ENCODE measurements at regions of chr3 and their contacts with region 1.

Region 1: DNA sequence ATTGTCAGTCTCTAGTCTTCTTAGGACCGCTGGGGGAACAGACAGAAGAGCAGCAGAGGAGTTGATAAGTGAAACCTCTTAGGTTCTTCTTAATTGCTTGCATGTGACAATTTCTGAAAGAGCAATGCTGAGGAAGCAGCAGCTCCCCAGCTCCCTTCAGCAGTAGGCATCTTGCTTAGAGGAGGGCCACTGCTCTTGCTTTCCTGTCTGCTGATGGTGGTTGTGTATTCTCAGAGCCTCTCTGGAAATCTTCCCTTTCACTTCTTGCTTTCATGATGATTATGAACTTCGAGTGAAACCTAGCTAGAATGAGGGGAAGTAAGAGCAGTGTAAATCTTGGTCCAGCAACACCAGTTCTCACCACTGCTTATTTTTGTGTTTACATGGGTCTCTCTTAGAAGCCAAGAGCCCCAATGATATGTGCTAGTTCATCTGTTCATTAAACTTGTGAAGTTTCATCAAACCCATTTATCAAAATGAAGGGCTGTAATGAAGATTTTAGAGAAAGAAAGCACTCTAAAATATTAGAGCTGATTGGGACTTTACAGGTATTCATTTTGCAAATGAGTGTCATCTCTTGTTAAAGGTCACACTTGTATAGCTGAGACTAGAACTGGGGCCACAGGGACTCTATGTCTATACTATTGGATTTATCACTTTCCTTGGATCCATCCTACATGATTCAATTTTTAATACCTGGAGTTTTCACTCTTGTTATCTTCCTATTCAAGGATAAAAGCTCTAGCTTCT is 246.7 kb downstream of the LPP start:
- DNase-seq: peak; percentile 22
- H3K4me3 Mint-ChIP-seq: no peak overlapping the region
- H3K27ac Mint-ChIP-seq: peak overlapping the region; percentile 63
- H3K4me1 Mint-ChIP-seq: peaks cover 73% of the 10 kb centered on the region
- H3K27me3 Mint-ChIP-seq: peaks cover 4% of the 10 kb centered on the region

Region 2: GRCh38 chr3:188061133-188061532 is 339.5 kb before region 1 on chr3:
- intact Hi-C with region 1: loop called (anchors 5 kb)
- DNase-seq: peak; percentile 38
- H3K4me3 Mint-ChIP-seq: peak overlapping the region; percentile 61
- H3K27ac Mint-ChIP-seq: peak overlapping the region; percentile 87
- H3K4me1 Mint-ChIP-seq: peaks cover 53% of the 10 kb centered on the region
- H3K27me3 Mint-ChIP-seq: no peaks in the 10 kb centered on the region

Region 3: DNA sequence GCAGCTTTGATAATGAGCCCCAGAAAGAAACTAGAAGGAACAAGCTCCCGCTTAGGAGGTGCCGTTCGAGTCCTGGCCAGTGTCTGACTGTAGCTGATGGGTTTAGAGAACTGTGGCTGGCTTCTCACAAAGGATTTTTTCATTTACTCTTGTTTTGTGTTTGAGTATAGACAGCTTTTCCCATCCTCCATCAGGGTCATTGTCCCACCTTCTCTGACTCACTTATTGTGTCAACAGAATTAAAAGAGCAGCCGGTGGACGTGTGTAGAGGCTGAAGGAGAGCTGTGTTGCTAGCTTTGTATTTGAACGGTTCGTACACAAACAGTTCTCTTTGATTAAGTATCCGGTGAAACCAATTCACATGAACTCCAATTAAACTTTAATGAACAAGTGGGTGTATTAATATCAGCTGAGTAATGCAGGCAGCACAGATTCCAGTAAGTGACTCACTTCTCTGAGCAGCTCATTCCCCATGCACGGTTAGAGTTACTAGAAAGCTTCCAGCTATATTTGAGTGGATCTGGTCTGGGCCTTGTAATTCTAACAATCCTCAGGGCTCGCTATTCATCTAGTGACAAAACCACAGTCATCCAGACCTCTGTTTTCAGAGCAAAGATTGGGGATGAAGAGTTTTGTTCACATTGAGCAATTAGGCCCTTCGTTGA is 105.7 kb before region 1 on chr3:
- intact Hi-C with region 1: loop called (anchors 1 kb)
- DNase-seq: no peak
- H3K4me3 Mint-ChIP-seq: no peak overlapping the region
- H3K27ac Mint-ChIP-seq: peak overlapping the region; percentile 33
- H3K4me1 Mint-ChIP-seq: peaks cover 86% of the 10 kb centered on the region
- H3K27me3 Mint-ChIP-seq: no peaks in the 10 kb centered on the region

Region 4: DNA sequence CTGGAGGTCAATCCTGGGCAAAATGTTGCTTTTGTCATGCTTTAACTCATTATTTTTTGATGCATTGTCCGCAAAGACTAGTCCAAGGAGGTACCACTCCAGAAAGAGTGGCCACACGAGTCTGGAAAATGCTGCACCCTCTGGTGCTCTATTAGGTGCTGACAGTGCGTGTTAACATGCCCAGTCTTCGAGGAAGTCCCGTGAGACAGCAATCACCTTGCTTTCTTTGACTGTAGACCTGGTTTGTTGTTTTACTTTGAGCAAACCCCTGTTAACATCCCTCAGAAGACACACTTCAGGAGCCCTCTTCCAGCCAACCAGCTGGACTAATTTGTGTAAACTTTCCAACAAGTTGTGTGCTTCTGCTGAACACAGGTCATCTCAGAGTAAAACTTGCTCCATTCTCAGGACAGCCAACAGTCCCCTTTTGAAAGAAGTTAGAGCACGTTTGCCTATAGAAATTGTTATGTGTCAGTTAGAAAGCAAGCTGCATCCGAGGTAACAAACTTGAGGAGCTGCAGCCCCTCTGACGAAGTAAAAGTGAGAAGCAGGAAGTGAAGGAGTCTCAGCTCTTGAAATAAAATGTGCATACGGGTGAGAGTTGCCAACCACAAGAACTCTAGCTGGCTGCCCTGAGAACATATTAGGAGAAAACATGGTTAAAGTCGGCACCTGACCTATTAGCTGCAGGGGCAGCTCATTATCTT is 41.7 kb before region 1 on chr3:
- intact Hi-C with region 1: loop called (anchors 5 kb)
- DNase-seq: no peak
- H3K4me3 Mint-ChIP-seq: peak overlapping the region; percentile 4
- H3K27ac Mint-ChIP-seq: no peak overlapping the region
- H3K4me1 Mint-ChIP-seq: peaks cover 36% of the 10 kb centered on the region
- H3K27me3 Mint-ChIP-seq: peaks cover 23% of the 10 kb centered on the region

Region 5: GRCh38 chr3:188439080-188439479 is 38.4 kb after region 1 on chr3:
- intact Hi-C with region 1: loop called (anchors 2 kb)
- DNase-seq: peak; percentile 31
- H3K4me3 Mint-ChIP-seq: peak overlapping the region; percentile 6
- H3K27ac Mint-ChIP-seq: peak overlapping the region; percentile 37
- H3K4me1 Mint-ChIP-seq: peaks cover 54% of the 10 kb centered on the region
- H3K27me3 Mint-ChIP-seq: no peaks in the 10 kb centered on the region

Region 6: DNA sequence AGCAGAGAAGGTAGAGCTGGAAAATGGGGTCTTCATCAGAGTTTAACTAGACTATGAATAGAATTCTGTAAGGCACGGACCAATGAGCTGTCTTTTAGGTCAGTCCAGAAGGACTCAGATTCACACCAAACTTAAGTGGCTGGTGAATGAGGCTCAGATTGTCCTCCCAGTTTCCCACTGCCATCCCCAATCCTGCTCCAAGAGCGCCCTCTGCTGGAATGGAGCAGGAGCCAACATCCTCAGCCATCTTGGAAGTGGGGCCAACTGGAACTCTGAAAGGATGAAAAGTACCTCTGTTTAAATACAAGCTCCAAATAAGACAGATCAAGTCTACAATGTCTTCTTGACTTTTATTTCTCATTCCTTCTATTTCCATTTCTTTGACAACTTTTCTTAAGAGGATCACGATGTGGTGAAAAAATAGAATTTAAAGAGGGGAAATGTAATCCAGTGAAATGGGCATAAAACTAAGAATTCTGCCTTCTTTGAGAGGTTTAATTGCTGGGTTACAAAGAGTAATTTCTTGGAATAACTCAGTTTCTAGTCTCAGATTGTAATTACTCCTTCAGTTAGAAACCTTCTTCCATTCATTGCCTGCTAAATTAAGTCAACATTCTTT is 554.0 kb after region 1 on chr3:
- intact Hi-C with region 1: loop called (anchors 5 kb)
- DNase-seq: peak; percentile 68
- H3K4me3 Mint-ChIP-seq: no peak overlapping the region
- H3K27ac Mint-ChIP-seq: no peak overlapping the region
- H3K4me1 Mint-ChIP-seq: peaks cover 46% of the 10 kb centered on the region
- H3K27me3 Mint-ChIP-seq: no peaks in the 10 kb centered on the region